ENCODE measurements at regions of chr1 and their contacts with region 1.

Region 1: GRCh38 chr1:168004531-168004930 is 67.7 kb upstream of the MPC2 start:
- DNase-seq: no peak
- H3K4me3 ChIP-seq: no peak overlapping the region
- H3K27ac ChIP-seq: no peak overlapping the region
- H3K4me1 ChIP-seq: peaks cover 0 to 10% (median 0%) of the 10 kb centered on the region in 4 donors
- H3K27me3 ChIP-seq: no peaks in the 10 kb centered on the region
- CTCF ChIP-seq: no peak
- EP300 ChIP-seq: no peak
- POLR2A ChIP-seq: no peak

Region 2: DNA sequence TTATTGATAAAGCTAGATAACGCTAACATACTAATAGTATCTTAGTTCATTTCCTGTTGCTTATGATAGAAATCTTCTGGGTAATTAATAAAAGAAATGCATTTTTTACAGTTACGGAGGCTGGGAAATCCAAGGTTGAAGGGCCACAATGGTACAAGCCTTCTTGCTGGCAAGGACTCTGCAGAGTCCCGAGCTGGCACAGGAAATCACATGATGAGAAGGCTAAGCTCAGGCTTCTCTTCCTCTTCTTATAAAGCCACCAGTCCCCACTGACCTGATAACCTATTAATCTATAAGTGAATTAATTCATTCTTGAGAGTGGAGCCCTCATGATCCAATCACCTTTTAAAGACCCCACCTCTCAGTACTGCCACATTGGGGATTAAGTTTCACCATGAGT is 49.6 kb after region 1 on chr1:
- intact Hi-C with region 1: loop called (anchors 5 kb)
- DNase-seq: no peak
- H3K4me3 ChIP-seq: no peak overlapping the region
- H3K27ac ChIP-seq: no peak overlapping the region
- H3K4me1 ChIP-seq: peaks cover 0 to 16% (median 4%) of the 10 kb centered on the region in 4 donors
- H3K27me3 ChIP-seq: no peaks in the 10 kb centered on the region
- CTCF ChIP-seq: no peak
- EP300 ChIP-seq: no peak
- POLR2A ChIP-seq: no peak

Region 3: DNA sequence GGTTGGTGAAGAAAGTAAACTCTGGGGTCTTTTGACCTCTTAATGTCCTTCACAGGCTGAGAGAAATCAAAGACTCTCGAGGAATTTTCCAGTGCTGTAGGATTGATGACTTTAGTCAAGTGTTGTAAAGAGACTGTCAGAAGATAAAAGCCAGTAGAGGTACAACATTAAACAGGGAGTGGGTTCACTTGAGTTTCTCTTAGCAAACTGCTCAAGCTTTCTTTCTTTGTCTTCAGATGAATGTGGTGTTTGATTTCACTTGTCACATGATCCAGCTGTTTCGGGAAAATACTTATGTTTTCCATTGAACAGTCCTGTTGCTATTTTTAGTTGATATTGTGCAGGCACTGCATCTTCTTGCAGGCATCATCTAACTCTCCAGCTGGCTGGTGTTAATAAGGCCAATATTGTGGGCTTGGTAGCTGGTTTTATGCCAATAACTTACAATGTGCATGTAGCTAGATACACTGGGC is 493.7 kb after region 1 on chr1:
- intact Hi-C with region 1: no loop called
- DNase-seq: peak; percentile 72
- H3K4me3 ChIP-seq: no peak overlapping the region
- H3K27ac ChIP-seq: peak overlapping the region; percentile 55 to 78 (median 68)
- H3K4me1 ChIP-seq: peaks cover 2 to 79% (median 48%) of the 10 kb centered on the region in 4 donors
- H3K27me3 ChIP-seq: no peaks in the 10 kb centered on the region
- CTCF ChIP-seq: no peak
- EP300 ChIP-seq: peak; percentile 84 to 98 (median 94)
- POLR2A ChIP-seq: no peak

Measured in sigmoid colon (tissue), 7 donors.